ENCODE measurements at regions of chr6 and their contacts with region 1.

Region 1: GRCh38 chr6:77457720-77458349 is 5.5 kb downstream of the HTR1B start:
- DNase-seq: peak; percentile 39 to 76
- ATAC-seq: peak; percentile 79 to 90 (median 84)
- H3K4me3 ChIP-seq: no peak overlapping the region
- H3K27ac ChIP-seq: peak overlapping the region in 4 of 10 donors; percentile 14 to 70 (median 50)
- H3K4me1 ChIP-seq: peaks cover 0 to 11% (median under 1%) of the 10 kb centered on the region in 9 donors
- H3K27me3 ChIP-seq: peaks cover 0 to 26% (median 18%) of the 10 kb centered on the region in 7 donors
- CTCF ChIP-seq: peak; percentile 30 to 79 (median 71)

Region 2: GRCh38 chr6:75893058-75893775 is 1564.6 kb before region 1 on chr6:
- intact Hi-C with region 1: loop called in 1 of 10 experiments (anchors 10 kb)
- DNase-seq: no peak
- ATAC-seq: peak in 1 of 8 donors; percentile 39
- H3K4me3 ChIP-seq: no peak overlapping the region
- H3K27ac ChIP-seq: no peak overlapping the region
- H3K4me1 ChIP-seq: no peaks in the 10 kb centered on the region
- H3K27me3 ChIP-seq: no peaks in the 10 kb centered on the region
- CTCF ChIP-seq: peak; percentile 47 to 80 (median 72)

Region 3: GRCh38 chr6:76682842-76683241 is 775.0 kb before region 1 on chr6:
- intact Hi-C with region 1: loop called in 5 of 10 experiments (anchors 5 to 10 kb)
- DNase-seq: no peak
- ATAC-seq: no peak
- H3K4me3 ChIP-seq: no peak overlapping the region
- H3K27ac ChIP-seq: no peak overlapping the region
- H3K4me1 ChIP-seq: no peaks in the 10 kb centered on the region
- H3K27me3 ChIP-seq: no peaks in the 10 kb centered on the region
- CTCF ChIP-seq: peak in 8 of 9 donors; percentile 14 to 55 (median 41)

Region 4: GRCh38 chr6:76697585-76697984 is 760.2 kb before region 1 on chr6:
- intact Hi-C with region 1: loop called in 3 of 10 experiments (anchors 5 kb)
- DNase-seq: no peak
- ATAC-seq: no peak
- H3K4me3 ChIP-seq: no peak overlapping the region
- H3K27ac ChIP-seq: no peak overlapping the region
- H3K4me1 ChIP-seq: no peaks in the 10 kb centered on the region
- H3K27me3 ChIP-seq: no peaks in the 10 kb centered on the region
- CTCF ChIP-seq: peak in 2 of 9 donors; percentile 4 to 15

Region 5: DNA sequence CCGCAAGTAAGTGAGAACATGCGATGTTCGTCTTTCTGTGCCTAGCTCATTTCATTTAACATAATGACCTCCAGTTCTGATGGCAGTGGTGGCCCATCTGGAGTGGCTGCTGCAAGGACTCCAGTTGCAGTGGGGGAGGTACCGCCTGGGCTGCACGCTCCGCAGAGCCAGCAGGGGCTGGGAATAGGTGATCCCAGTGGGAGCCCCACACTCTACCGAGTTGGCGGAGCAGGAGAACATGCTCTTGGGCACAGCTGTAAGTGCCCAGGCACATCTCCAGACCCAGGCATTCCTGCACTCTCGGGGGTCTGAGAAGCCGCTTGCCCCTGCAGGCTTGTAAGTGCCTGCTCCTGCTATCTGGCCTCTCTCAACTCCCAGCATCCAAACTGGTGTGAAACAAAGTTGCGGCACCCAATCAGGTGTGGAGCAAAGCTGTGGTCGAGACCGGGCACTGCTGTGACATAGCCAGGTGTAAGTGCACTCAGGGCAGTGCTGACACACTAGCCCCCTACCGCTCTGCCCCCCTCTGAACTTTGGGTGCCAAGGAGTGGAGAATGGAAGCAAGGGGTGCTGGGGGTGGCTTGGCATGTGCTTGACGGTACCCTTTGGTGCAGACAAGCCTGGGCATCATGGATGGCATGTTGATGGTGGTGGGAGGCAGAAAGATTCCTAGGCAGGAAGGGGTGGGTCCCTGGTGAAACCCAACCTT is 124.8 kb before region 1 on chr6:
- intact Hi-C with region 1: loop called in 1 of 10 experiments (anchors 10 kb)
- DNase-seq: no peak
- ATAC-seq: no peak
- H3K4me3 ChIP-seq: no peak overlapping the region
- H3K27ac ChIP-seq: no peak overlapping the region
- H3K4me1 ChIP-seq: no peaks in the 10 kb centered on the region
- H3K27me3 ChIP-seq: no peaks in the 10 kb centered on the region
- CTCF ChIP-seq: no peak

Region 6: GRCh38 chr6:77403424-77403823 is 54.4 kb before region 1 on chr6:
- intact Hi-C with region 1: no loop called
- DNase-seq: no peak
- ATAC-seq: peak in 2 of 8 donors; percentile 65 to 83
- H3K4me3 ChIP-seq: no peak overlapping the region
- H3K27ac ChIP-seq: no peak overlapping the region
- H3K4me1 ChIP-seq: peaks cover 0 to 3% (median 0%) of the 10 kb centered on the region in 9 donors
- H3K27me3 ChIP-seq: no peaks in the 10 kb centered on the region
- CTCF ChIP-seq: no peak

Measured in heart right ventricle (tissue), 16 donors.